Activated CD8-positive, alpha-beta memory T cell treated with anti-CD3 and anti-CD28 coated beads, Interleukin-2, amount 10 ng/mL, durations not matched to agents 7 days and 5 days (primary cell): ENCODE measurements at regions of chr6 and their contacts with region 1.

Region 1: DNA sequence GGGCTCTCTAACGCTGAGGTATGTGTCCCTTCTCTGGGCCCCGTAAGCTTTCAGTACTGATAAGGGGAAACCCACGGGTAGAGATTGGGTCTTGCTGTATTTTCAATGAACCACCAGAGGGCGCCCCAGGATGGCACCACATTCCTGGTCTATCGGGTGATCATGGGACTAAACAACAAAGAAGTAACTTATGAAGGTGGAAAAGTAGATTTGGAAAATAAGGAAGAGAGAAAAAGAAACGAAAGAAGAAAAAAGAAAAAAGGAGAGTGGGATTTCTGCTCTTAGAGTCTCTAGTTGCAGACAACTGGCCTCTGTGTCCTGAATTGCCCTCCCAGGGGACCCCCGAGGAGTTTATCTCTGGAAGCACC is 93.8 kb downstream of the GMPR start:
- DNase-seq: peak; percentile 86
- ATAC-seq: peak; percentile 90
- H3K4me3 Mint-ChIP-seq: no peak overlapping the region
- H3K27ac Mint-ChIP-seq: no peak overlapping the region
- H3K4me1 Mint-ChIP-seq: peaks cover 7% of the 10 kb centered on the region
- H3K27me3 Mint-ChIP-seq: no peaks in the 10 kb centered on the region

Region 2: DNA sequence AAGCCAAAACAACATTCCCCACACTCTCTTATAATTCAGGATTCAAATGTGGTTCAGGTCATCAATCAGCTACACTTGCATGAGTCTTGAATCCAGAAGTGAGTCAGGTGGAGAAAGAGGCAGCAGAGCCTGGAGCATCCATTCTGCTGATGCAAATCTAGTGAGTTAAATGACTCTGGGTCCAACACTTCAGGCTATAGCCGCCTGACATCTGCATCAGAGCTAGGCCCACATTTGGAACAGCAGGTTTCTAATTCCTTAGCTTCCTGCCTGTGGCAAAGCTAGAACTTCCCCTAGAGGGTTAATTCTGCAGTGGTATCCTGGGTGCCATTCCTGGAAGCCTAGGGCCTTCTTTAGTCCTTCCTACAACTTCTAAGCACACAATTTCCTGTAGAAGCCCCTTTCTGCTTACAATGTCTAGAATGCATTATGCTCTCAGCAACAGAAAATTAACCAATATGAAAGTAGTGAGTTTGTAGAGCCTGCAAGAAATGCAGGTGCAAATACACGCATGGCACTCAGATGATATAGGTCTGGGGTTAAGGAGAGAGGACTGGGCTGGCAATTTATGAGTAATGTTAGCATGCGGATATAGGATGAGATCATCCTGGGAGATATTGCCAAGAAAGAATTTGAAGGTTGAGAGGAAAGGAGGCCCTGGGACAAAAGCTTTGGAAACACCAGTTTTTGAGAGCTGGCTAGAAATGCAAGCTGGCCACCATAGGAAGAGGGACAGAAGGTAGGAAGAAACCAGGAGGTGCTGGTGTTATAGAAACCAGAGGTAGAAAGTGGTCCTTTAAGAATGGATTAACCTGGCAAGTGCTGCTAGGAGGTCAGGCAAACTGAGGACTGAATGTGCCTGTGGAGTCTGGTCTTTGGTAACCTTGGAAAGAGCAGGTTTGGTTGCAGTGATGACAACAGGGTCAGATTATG is 386.7 kb before region 1 on chr6:
- CTCF ChIA-PET with region 1: no interaction called
- DNase-seq: no peak
- ATAC-seq: no peak
- H3K4me3 Mint-ChIP-seq: no peak overlapping the region
- H3K27ac Mint-ChIP-seq: no peak overlapping the region
- H3K4me1 Mint-ChIP-seq: no peaks in the 10 kb centered on the region
- H3K27me3 Mint-ChIP-seq: peaks cover 8% of the 10 kb centered on the region

Region 3: DNA sequence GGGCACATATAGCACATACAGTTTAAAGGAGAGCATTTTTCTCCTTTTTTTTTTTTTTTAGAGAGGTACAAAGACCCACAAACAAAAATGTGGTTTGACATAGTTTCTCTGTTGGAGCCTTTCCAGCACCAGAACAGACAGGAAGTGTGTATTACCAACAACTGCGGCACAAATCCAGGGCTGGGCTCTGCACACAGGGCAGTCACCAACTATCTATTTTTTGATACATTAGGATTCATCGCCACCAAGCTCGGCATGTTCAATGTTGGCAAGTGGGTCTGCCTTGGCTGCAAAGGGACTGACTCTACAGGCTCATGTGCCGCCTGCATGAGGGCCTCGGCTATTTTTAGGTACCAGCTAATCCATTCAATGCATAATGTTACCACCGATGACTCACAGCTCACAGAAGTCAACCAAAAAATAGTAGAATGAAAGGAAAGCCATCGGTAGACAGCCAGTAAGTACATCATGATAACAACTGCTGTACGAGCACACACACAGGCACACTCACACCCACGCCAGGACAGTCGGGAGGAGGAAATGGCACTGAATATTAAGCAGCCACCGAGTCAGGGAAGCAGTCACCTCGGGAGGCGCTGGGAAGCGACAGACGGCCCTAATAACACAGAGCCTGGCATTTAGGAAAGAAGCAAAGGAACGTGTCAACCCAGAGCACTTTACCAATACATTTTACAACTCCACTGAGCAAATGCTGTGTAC is 12.2 kb before region 1 on chr6:
- CTCF ChIA-PET with region 1: interaction called, 35 read pairs
- DNase-seq: peak; percentile 82
- ATAC-seq: peak; percentile 73
- H3K4me3 Mint-ChIP-seq: peak overlapping the region; percentile 66
- H3K27ac Mint-ChIP-seq: peak overlapping the region; percentile 91
- H3K4me1 Mint-ChIP-seq: peaks cover 77% of the 10 kb centered on the region
- H3K27me3 Mint-ChIP-seq: no peaks in the 10 kb centered on the region

Region 4: GRCh38 chr6:16409531-16410441 is 77.6 kb after region 1 on chr6:
- CTCF ChIA-PET with region 1: interaction called, 15 read pairs
- DNase-seq: peak; percentile 75
- ATAC-seq: peak; percentile 54
- H3K4me3 Mint-ChIP-seq: no peak overlapping the region
- H3K27ac Mint-ChIP-seq: peak overlapping the region; percentile 56
- H3K4me1 Mint-ChIP-seq: peaks cover 47% of the 10 kb centered on the region
- H3K27me3 Mint-ChIP-seq: no peaks in the 10 kb centered on the region

Region 5: DNA sequence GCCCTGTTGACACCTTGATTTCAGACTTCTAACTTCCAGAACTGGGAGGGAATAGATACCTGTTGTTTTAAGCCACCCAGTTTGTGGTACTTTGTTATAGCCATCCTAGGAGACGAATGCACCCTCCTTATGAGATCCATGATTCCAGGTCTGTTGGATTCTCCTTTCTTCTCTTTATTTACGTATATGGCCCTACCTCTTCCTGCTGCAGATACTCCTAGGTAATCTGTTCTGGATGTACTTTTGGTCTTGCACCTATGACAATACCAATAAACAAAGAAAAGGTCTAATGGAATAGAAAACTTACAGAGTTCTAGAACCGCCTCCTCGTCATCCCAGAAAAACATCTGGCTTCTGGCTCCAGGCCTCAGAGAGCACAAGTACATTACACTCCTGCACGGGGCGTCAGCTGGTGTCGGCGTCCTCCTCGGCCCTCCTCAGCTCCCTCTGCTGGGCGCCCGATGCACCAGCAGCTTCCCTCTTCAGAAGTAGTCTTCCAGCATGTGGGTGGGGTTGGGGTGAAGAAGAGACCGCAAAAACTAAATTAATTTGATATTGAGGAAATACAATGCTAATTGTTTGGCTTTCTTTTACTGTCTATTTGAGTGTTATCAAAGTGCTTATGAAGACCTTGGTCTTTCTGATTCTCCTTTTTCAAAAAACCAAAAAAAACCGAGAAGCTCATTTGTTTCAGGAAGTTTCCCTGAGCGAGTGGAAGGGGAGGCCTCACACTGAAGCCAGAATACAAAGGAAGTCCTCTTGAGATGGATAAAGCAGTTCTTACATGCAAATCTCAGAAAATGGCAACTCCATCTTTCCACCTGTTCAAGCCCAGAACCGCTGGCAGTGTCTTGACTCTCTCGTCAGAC is 438.8 kb after region 1 on chr6:
- CTCF ChIA-PET with region 1: interaction called, 12 read pairs
- DNase-seq: peak; percentile 84
- ATAC-seq: peak; percentile 69
- H3K4me3 Mint-ChIP-seq: peak overlapping the region; percentile 36
- H3K27ac Mint-ChIP-seq: no peak overlapping the region
- H3K4me1 Mint-ChIP-seq: peaks cover 54% of the 10 kb centered on the region
- H3K27me3 Mint-ChIP-seq: no peaks in the 10 kb centered on the region

Region 6: GRCh38 chr6:16964553-16965501 is 632.7 kb after region 1 on chr6:
- CTCF ChIA-PET with region 1: interaction called, 12 read pairs
- DNase-seq: peak; percentile 76
- ATAC-seq: peak; percentile 70
- H3K4me3 Mint-ChIP-seq: no peak overlapping the region
- H3K27ac Mint-ChIP-seq: no peak overlapping the region
- H3K4me1 Mint-ChIP-seq: peaks cover 6% of the 10 kb centered on the region
- H3K27me3 Mint-ChIP-seq: peaks cover 15% of the 10 kb centered on the region